ENCODE measurements at regions of chr11 and their contacts with region 1.

Region 1: GRCh38 chr11:75802913-75803820 is 11.8 kb upstream of the UVRAG start:
- DNase-seq: peak; percentile 81
- ATAC-seq: peak; percentile 91
- H3K4me3 Mint-ChIP-seq: no peak overlapping the region
- H3K27ac Mint-ChIP-seq: no peak overlapping the region
- H3K4me1 Mint-ChIP-seq: peaks cover 12% of the 10 kb centered on the region
- H3K27me3 Mint-ChIP-seq: peaks cover 6% of the 10 kb centered on the region

Region 2: DNA sequence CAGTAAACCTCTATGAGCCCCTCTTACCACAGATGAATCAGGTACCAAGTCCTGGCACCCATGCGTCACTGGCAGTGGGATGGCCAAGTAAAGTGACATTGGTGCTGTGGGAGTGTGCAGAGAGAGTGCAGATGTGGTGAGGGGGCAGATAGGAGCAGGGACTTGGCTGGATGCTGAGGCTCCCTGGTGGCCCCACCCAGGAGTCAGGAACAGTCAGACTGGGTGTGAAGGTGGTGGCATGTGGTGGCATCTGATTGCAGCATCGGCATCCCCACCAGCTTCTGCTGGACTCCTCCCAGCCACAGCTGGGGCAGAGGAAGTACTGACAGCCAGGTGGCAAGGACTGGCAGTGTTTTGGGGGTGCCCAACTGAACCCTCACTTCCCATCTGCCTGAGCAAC is 23.2 kb before region 1 on chr11:
- CTCF ChIA-PET with region 1: interaction called, 10 read pairs
- DNase-seq: no peak
- ATAC-seq: no peak
- H3K4me3 Mint-ChIP-seq: no peak overlapping the region
- H3K27ac Mint-ChIP-seq: no peak overlapping the region
- H3K4me1 Mint-ChIP-seq: peaks cover 28% of the 10 kb centered on the region
- H3K27me3 Mint-ChIP-seq: no peaks in the 10 kb centered on the region

Region 3: DNA sequence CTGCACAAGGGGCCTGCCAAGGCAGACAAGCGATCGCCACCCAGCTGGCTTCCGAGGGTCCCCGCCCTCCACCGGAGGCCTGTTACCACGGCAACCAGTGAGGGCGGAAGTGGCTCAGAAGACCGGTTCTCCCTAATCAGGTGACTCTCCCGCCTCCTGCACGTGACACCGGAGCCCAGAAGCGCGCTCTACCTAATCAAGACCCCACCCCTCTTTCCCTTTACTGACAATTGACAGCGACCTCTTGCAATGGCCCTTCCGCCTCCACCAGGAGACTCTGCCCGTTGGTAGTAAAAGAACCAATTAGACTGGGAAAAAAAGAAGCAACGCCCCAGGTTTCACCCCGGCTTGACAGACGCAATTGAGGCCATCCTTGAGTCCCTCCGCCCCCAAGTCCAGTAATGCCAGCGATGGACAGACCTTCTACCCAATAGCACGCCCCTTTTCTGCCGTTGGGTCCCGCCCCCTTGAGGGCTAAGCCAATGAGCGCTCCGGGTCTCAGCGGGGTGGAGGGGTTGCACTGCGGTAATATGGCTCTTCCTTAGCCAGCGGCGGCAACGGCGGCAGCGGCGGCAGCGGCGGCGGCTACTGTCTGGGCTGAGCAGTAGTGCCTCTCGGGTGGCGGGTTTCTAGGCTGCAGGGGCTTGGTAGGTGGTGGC is 11.6 kb after region 1 on chr11 and contains the start of gene UVRAG:
- CTCF ChIA-PET with region 1: interaction called, 52 read pairs
- DNase-seq: peak; percentile 99
- ATAC-seq: peak; percentile 91
- H3K4me3 Mint-ChIP-seq: no peak within 1 kb of the TSS
- H3K27ac Mint-ChIP-seq: peak within 1 kb of the TSS; percentile 94
- H3K4me1 Mint-ChIP-seq: peaks cover 15% of the 10 kb centered on the region
- H3K27me3 Mint-ChIP-seq: no peaks in the 10 kb centered on the region
- total RNA-seq, gene UVRAG: 17.4 to 25.5 TPM

Region 4: GRCh38 chr11:75867775-75868374 is 64.7 kb after region 1 on chr11:
- CTCF ChIA-PET with region 1: interaction called, 93 read pairs
- DNase-seq: peak; percentile 44
- ATAC-seq: peak; percentile 57
- H3K4me3 Mint-ChIP-seq: no peak overlapping the region
- H3K27ac Mint-ChIP-seq: no peak overlapping the region
- H3K4me1 Mint-ChIP-seq: peaks cover 9% of the 10 kb centered on the region
- H3K27me3 Mint-ChIP-seq: no peaks in the 10 kb centered on the region

Region 5: GRCh38 chr11:75919525-75919924 is 116.4 kb after region 1 on chr11:
- CTCF ChIA-PET with region 1: no interaction called
- DNase-seq: no peak
- ATAC-seq: no peak
- H3K4me3 Mint-ChIP-seq: no peak overlapping the region
- H3K27ac Mint-ChIP-seq: no peak overlapping the region
- H3K4me1 Mint-ChIP-seq: peaks cover 2% of the 10 kb centered on the region
- H3K27me3 Mint-ChIP-seq: no peaks in the 10 kb centered on the region

Region 6: GRCh38 chr11:75954039-75954438 is 150.9 kb after region 1 on chr11:
- CTCF ChIA-PET with region 1: no interaction called
- DNase-seq: no peak
- ATAC-seq: no peak
- H3K4me3 Mint-ChIP-seq: no peak overlapping the region
- H3K27ac Mint-ChIP-seq: no peak overlapping the region
- H3K4me1 Mint-ChIP-seq: no peaks in the 10 kb centered on the region
- H3K27me3 Mint-ChIP-seq: no peaks in the 10 kb centered on the region

Region 7: DNA sequence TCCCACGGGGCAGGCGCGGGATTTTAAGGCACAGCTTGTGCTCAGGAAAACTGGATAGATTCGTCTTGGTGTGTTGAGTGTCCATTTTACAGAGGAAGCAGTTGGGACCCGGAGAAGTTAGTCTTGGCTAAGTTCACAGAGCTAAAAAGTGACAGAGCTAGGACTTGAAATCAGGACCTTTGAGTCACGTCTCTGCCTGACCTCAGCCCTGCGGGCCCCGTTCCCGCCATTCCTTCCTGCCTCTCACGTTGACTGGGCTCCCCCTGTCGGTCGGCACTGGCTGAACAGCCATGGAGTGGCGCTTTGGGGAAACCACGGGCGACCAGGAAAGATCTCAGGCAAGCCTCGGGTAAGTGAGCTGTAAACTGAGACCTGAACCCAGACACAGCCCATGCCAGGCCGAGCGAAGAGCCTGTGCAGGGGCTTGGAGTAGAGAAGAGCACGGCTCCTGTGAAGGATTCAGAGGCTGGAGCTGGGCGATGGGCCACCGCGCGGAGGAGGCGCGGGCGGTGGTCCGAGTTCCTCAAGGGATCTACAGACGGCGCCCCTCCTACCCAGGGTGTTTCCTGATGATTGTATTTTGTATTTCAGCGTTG is 349.0 kb after region 1 on chr11:
- CTCF ChIA-PET with region 1: interaction called, 24 read pairs
- DNase-seq: peak; percentile 92
- ATAC-seq: peak; percentile 95
- H3K4me3 Mint-ChIP-seq: peak overlapping the region; percentile 60
- H3K27ac Mint-ChIP-seq: peak overlapping the region; percentile 12
- H3K4me1 Mint-ChIP-seq: peaks cover 25% of the 10 kb centered on the region
- H3K27me3 Mint-ChIP-seq: peaks cover 14% of the 10 kb centered on the region

Measured in activated CD8-positive, alpha-beta memory T cell treated with anti-CD3 and anti-CD28 coated beads, Interleukin-2, amount 10 ng/mL, durations not matched to agents 7 days and 5 days (primary cell).